ENCODE measurements at regions of chr7 and their contacts with region 1.

Region 1: DNA sequence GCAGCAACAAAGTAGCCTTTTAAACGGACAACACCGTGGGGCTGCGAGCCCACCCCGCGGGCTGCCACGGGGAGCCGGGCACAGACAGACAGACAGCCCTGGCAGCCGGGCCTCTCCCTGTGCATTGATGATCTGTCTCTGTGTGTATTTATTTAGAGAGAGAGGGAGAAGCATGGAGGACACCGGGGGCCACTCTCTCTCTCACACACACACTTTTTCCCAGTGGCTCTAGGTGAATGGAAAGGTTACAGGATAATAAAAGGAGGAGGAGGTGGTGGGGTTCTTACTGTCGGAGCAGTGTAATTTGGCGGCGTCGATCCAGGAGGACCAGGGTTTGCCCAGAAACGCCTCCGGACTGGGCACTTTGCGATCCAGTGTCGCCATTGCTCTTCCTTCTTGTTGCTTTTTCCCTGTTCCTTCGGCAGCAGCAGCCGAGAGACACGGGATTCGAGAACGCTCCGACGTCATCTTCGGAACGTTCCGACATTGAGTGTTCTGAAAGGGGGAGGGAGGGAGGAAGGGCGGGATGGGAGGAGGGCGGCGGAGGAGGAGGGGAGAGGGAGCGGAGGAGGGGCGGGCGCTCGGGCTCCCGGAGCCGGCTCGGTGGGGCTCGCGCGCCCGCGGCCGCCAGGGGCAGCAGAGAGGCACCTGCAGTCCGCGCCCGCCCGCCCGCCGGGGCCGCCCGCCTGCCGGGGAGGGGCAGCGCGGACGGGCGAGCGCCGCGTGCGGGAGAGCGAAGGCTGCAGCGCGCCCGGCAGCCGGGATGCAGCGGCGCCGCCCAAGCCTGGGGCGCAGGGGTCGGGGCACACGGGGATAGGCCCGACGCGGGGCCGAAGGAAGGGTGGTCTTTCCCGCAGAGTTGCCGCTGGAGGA is at the start of gene ATXN7L1:
- DNase-seq: peak; percentile 96
- H3K4me3 Mint-ChIP-seq: peak within 1 kb of the TSS; percentile 91
- H3K27ac Mint-ChIP-seq: peak within 1 kb of the TSS; percentile 82
- H3K4me1 Mint-ChIP-seq: peaks cover 35% of the 10 kb centered on the region
- H3K27me3 Mint-ChIP-seq: peaks cover 39% of the 10 kb centered on the region
- total RNA-seq, gene ATXN7L1: 8.5 and 9.8 TPM in 2 replicates

Region 2: DNA sequence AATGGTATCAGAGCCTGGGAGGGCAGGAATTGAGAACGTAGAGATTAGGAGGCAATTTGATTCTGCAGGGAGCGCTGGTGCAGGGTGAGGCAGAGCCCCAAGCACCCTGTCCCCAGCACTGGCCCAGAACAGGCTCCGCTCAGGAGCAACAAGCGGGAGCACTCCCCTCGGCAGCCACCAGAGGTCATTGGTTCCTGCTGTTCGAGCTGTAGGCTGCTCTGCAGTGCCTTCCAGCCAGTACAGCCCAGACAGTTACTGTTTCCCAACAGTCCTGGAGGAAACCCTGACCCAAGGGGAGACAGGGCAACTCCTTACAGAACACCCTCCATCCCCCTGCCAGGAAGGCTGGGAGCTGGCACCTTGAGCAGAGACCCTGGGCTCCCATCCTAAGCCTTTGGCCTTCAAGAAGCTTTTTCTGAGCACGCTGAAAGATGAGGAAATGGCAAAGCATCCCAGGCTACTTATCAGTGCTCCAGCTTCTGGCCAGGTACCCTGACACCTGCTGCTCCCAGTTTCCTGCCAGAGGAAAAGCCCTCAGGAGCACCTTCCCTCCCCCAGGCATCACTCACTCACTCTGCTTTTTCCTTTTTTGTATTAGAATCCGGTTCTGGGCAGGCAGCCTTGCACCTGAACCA is 223.9 kb before region 1 on chr7:
- intact Hi-C with region 1: loop called (anchors 10 kb)
- DNase-seq: peak; percentile 89
- H3K4me3 Mint-ChIP-seq: no peak overlapping the region
- H3K27ac Mint-ChIP-seq: no peak overlapping the region
- H3K4me1 Mint-ChIP-seq: peaks cover 6% of the 10 kb centered on the region
- H3K27me3 Mint-ChIP-seq: no peaks in the 10 kb centered on the region

Region 3: DNA sequence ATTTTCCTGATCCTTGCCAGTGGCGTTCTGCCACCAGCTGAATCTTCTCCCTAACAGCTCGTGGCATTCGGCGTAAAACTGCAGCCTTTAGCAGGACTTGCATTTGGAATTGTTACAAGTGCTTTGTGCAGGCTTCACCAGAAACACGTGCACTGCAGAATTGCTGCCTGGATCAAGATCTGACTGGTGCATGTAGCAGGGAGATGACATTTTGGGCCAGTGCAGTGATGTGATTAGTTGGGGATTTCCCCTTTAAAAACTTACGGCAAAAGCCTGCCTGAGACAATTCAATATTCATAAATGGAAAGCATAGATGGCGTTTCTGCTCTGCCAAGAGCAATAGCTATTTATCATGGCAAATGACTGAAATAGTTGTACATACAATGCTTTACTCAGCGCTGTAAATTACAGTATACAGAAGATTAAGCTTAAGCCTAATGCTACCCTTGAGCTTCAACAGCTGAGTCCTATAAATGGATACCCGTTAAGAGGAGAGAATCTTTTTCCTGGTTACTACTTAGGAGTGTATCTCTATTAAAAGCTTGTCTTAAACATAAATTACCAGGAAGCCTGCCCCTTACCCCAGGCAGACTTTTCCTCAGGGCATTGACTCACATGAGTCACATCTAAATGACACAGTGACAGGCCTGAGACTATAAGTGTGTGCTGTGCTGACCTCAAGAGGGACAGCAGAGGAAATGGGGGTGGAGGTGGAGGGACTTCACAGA is 106.3 kb before region 1 on chr7:
- intact Hi-C with region 1: loop called (anchors 5 kb)
- DNase-seq: no peak
- H3K4me3 Mint-ChIP-seq: no peak overlapping the region
- H3K27ac Mint-ChIP-seq: no peak overlapping the region
- H3K4me1 Mint-ChIP-seq: peaks cover 16% of the 10 kb centered on the region
- H3K27me3 Mint-ChIP-seq: peaks cover 28% of the 10 kb centered on the region

Region 4: GRCh38 chr7:105849122-105849855 is 27.0 kb before region 1 on chr7:
- intact Hi-C with region 1: loop called (anchors 1 kb)
- DNase-seq: peak; percentile 90
- H3K4me3 Mint-ChIP-seq: peak overlapping the region; percentile 23
- H3K27ac Mint-ChIP-seq: peak overlapping the region; percentile 59
- H3K4me1 Mint-ChIP-seq: peaks cover 44% of the 10 kb centered on the region
- H3K27me3 Mint-ChIP-seq: peaks cover 1% of the 10 kb centered on the region

Region 5: DNA sequence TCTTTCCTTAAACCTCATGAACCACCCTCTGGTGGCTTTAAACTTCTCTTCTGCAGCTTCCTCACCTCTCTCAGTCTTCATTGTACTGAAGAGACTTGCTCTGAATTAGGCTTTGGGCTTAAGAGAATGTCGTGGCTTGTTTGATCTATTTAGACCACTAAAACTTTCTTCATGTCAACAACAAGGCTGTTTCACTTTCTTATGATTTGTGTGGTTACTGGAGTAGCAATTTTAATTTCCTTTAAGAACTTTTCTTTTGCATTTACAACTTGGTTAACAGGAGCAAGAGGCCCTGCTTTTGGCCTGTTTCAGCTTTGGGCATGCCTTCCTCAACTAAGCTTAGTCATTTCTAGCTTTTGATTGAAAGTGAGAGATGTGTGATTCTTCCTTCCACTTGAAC is 48.6 kb after region 1 on chr7:
- intact Hi-C with region 1: loop called (anchors 2 kb)
- DNase-seq: peak; percentile 76
- H3K4me3 Mint-ChIP-seq: no peak overlapping the region
- H3K27ac Mint-ChIP-seq: peak overlapping the region; percentile 22
- H3K4me1 Mint-ChIP-seq: peaks cover 13% of the 10 kb centered on the region
- H3K27me3 Mint-ChIP-seq: peaks cover 26% of the 10 kb centered on the region

Region 6: DNA sequence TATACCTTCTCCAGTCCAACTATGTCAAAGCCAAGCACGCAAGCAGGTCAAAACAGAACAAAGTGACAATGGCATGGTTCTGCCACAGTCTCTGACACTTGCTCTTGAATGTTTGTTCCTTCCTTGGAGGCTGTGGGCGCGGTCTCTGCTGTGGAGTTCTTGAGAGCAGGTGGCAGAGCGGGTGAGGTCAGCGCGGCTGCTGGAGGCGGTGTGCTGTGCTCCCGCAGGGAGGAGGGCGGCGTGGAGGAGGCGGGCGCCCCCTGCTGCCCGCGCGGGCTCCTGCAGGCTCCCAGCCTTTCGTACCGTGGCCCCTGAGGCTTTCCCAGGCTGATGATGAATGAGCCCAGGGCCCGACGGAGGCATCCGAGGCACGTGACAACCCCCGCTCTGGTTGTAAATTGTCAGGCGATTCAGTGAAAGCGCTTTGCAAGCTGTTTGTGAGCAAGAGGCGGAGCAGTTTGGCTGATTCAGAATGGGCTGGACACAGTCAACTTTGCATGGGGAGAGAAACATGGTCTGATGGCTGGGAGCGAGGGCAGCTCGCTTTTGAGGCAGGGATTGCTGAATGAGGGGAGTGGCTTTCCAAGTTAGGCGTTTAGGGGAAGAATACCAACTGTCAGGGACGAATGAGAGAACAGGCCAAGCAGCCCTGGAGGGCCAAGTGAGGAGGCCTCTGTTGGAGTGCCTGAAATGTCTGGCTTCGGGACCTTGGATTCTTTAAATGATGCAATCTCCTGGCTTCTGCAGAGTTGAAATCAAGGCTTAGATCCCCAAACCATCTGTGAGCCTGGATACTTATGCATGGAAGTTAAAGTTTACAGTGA is 133.3 kb after region 1 on chr7:
- intact Hi-C with region 1: loop called (anchors 2 kb)
- DNase-seq: peak; percentile 94
- H3K4me3 Mint-ChIP-seq: no peak overlapping the region
- H3K27ac Mint-ChIP-seq: no peak overlapping the region
- H3K4me1 Mint-ChIP-seq: peaks cover 10% of the 10 kb centered on the region
- H3K27me3 Mint-ChIP-seq: peaks cover 50% of the 10 kb centered on the region

Region 7: DNA sequence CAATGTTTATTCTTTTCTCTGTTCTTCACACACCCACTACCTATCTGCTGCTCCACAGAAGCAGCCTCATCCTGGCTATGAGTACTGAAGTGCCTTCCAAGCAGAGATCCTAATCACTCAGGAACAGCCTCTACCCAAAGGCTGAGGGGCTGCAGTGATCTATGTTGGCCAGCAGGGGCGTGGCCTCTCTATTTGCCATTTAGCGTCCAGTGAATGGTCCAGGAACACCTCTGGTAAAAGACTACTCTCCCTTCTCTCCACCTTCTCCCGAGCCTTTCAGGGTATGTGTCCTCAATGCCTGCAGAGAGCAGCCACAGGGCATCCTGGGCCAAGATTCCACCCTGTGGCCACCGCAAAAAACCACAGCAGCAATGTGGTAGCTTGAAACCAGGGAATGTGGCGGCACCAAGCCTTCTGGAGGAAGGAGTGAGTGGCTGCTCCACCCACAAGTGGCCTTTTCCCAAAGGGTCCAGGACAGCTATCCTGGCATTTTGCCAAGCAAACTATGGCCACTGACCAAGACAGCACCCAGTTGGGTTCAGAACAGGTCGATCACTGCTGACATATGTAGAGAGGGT is 164.9 kb after region 1 on chr7:
- intact Hi-C with region 1: no loop called
- DNase-seq: peak; percentile 73
- H3K4me3 Mint-ChIP-seq: no peak overlapping the region
- H3K27ac Mint-ChIP-seq: no peak overlapping the region
- H3K4me1 Mint-ChIP-seq: peaks cover 9% of the 10 kb centered on the region
- H3K27me3 Mint-ChIP-seq: peaks cover 32% of the 10 kb centered on the region